Activated naive CD8-positive, alpha-beta T cell treated with anti-CD3 and anti-CD28 coated beads, Interleukin-2, amount 10 ng/mL, durations not matched to agents 7 days and 5 days (primary cell): ENCODE measurements at regions of chr22 and their contacts with region 1.

Region 1: DNA sequence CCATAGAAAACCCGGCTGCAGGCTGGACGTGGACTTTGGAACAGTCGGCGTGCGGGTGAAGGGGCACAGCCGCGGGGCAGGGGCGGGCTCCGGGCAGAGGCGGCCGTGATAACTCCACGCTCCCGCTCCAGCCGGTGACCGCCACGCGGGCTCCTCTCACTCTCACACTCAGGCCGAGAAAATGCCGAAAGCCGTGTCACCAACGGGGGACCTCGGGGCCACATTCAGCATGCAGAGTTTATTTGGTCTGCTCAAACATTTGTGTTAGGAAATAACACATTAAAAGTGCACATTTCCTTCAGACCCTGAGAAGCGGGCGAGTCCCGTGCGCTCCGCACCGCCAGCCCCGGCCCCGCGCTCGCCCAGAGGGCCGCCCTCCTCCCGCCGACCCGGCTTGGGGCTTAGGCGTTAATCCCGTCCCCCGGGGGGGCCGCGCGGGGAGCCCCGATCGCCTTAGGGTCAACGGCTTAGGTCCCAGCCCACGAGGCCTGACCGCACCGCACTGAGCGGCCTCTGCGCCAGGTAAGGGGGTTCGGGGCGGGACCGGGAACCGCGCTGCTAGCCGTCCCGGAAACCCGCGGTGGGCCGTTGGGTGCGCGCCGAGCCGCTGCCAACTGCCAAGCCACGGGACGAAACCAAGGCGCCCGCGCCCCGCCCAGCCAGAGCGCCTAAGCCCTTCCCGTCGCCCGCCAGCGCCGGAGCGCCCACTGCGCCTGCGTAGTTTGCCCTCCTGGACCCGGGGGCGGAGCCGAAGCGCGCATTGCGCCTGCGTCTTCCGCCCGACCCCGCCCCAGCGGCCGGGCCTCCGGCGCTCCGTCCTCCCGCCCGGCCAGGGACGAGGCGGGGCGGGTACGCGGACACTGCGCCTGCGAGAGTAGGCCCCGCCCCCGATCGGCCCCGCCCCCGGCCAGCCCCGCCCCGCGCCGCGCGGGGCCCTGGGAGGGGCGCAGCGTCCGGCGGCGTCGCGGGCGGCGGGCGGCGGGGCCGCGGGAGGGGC is at the start of gene ZBED4:
- DNase-seq: peak; percentile 100
- ATAC-seq: peak; percentile 83
- H3K4me3 Mint-ChIP-seq: peak within 1 kb of the TSS; percentile 93
- H3K27ac Mint-ChIP-seq: peak within 1 kb of the TSS; percentile 90
- H3K4me1 Mint-ChIP-seq: peaks cover 27% of the 10 kb centered on the region
- H3K27me3 Mint-ChIP-seq: peaks cover 16% of the 10 kb centered on the region
- total RNA-seq, gene ZBED4: 21.0 to 21.5 TPM

Region 2: GRCh38 chr22:49760630-49761571 is 92.3 kb before region 1 on chr22:
- POLR2A ChIA-PET with region 1: no interaction called
- DNase-seq: peak; percentile 49
- ATAC-seq: peak; percentile 77
- H3K4me3 Mint-ChIP-seq: peak overlapping the region; percentile 32
- H3K27ac Mint-ChIP-seq: peak overlapping the region; percentile 82
- H3K4me1 Mint-ChIP-seq: peaks cover 20% of the 10 kb centered on the region
- H3K27me3 Mint-ChIP-seq: no peaks in the 10 kb centered on the region

Region 3: GRCh38 chr22:49827853-49828598 is 25.2 kb before region 1 on chr22 and contains the start of gene BRD1:
- POLR2A ChIA-PET with region 1: interaction called, 16 read pairs
- DNase-seq: peak; percentile 81
- ATAC-seq: peak; percentile 61
- H3K4me3 Mint-ChIP-seq: peak within 1 kb of the TSS; percentile 87
- H3K27ac Mint-ChIP-seq: peak within 1 kb of the TSS; percentile 90
- H3K4me1 Mint-ChIP-seq: peaks cover 30% of the 10 kb centered on the region
- H3K27me3 Mint-ChIP-seq: no peaks in the 10 kb centered on the region
- total RNA-seq, gene BRD1: 56.7 to 56.9 TPM

Region 4: DNA sequence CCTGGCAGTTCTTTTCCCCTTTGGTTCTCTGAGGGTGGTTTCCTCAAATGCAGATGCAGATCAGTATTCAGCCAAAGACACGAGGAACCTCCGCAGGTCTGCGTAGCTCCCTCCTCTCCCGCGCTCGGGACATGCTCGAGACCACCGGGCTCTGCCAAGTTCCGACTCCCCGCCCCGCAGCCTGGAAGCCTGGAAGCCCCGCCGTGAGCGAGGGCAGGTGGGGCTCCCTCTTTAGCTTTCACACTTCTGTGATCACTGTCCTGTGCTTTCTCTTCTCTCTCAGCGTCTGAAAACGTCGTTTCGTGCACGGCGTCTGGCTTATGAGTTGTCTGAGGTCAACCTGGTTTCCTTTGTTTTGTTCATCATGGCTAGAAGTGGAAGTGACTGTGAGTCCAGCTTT is 27.1 kb after region 1 on chr22:
- POLR2A ChIA-PET with region 1: no interaction called
- DNase-seq: no peak
- ATAC-seq: peak; percentile 72
- H3K4me3 Mint-ChIP-seq: peak overlapping the region; percentile 40
- H3K27ac Mint-ChIP-seq: peak overlapping the region; percentile 82
- H3K4me1 Mint-ChIP-seq: peaks cover 20% of the 10 kb centered on the region
- H3K27me3 Mint-ChIP-seq: no peaks in the 10 kb centered on the region

Region 5: DNA sequence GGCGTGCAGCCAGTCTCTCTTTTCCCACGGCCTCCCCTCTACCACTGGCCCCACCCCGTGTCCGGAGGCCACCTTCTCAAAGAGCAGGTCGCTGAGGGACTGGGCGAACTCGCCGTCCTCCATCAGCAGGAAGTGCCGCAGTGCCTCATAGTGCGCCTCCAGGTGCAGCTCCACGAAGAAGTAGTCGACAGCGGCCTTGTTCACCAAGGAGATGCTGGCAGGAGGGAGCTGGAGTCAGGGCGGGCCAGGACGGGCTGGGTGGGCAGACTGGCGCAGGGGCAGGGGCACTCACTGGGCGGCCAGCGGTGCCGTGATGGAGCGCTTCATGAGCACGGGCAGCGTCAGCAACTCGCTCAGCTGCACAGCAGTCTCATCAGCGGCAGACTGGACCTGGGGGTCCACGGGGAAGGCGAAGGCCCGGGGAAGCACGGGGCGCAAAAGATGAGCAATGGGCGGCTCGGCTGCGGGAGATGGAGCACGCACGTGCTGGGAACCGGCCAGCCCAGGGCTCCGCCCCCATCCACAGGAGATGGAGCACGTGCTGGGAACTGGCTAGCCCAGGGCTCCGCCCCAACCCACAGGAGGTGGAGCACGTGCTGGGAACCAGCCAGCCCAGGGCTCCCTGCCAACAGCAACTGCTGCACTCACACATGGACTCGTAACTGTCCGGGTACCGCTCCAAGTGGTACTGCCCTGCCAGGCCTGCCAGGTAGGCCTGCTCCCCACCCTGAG is 366.0 kb after region 1 on chr22:
- POLR2A ChIA-PET with region 1: no interaction called
- DNase-seq: no peak
- ATAC-seq: no peak
- H3K4me3 Mint-ChIP-seq: no peak overlapping the region
- H3K27ac Mint-ChIP-seq: no peak overlapping the region
- H3K4me1 Mint-ChIP-seq: no peaks in the 10 kb centered on the region
- H3K27me3 Mint-ChIP-seq: no peaks in the 10 kb centered on the region